ENCODE measurements at regions of chr2 and their contacts with region 1.

Region 1: GRCh38 chr2:222311978-222312738 is 13.4 kb upstream of the PAX3 start:
- DNase-seq: peak in 1 of 3 donors; percentile 18
- H3K4me3 ChIP-seq: no peak overlapping the region
- H3K27ac ChIP-seq: no peak overlapping the region
- H3K4me1 ChIP-seq: peaks cover 0 to 5% (median 0%) of the 10 kb centered on the region in 4 experiments
- H3K27me3 ChIP-seq: peaks cover 62 to 100% (median 79%) of the 10 kb centered on the region in 5 experiments

Region 2: GRCh38 chr2:222290736-222291484 is 21.2 kb before region 1 on chr2:
- CTCF ChIA-PET with region 1: interaction called, 11 read pairs
- POLR2A ChIA-PET with region 1: no interaction called
- DNase-seq: no peak
- H3K4me3 ChIP-seq: no peak overlapping the region
- H3K27ac ChIP-seq: no peak overlapping the region
- H3K4me1 ChIP-seq: peaks cover 0 to 8% (median 6%) of the 10 kb centered on the region in 4 experiments
- H3K27me3 ChIP-seq: peaks cover 44 to 100% (median 66%) of the 10 kb centered on the region in 5 experiments

Region 3: DNA sequence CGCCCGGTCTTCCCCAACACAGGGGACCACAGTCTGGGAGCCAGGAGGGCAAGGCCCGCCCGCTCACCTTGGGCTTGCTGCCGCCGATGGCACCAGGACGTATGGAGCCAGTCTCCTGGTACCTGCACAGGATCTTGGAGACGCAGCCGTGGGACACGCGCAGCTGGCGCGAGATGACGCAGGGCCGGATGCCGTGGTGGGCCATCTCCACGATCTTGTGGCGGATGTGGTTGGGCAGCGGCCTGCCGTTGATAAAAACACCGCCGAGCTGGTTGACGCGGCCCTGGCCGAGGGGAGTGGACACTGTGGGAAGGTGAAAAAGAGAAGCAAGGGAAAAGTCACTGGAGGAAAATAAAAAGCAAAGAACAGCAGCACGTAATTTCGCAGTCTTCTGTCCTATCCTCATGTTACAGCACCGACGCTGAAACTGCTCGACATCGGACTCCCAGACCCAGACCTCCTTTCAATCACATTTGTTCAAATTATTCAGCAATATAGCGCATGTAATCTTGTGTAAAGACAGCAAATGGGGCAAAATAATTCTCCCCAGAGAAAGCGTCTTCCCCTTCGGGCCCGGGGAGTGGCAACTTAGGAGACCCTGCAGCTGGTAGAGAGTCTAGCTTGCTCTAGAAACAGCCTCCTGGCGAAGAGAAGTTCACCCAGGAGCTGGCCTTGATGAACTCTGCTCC is 15.1 kb before region 1 on chr2:
- CTCF ChIA-PET with region 1: interaction called, 11 read pairs
- POLR2A ChIA-PET with region 1: no interaction called
- DNase-seq: peak; percentile 65 to 81 (median 73)
- H3K4me3 ChIP-seq: no peak overlapping the region
- H3K27ac ChIP-seq: no peak overlapping the region
- H3K4me1 ChIP-seq: peaks cover 0 to 33% (median 21%) of the 10 kb centered on the region in 4 experiments
- H3K27me3 ChIP-seq: peaks cover 3 to 100% (median 71%) of the 10 kb centered on the region in 5 experiments